ENCODE measurements at regions of chr10 and their contacts with region 1.

Region 1: GRCh38 chr10:11515596-11516430 is 95.6 kb downstream of the USP6NL start:
- DNase-seq: peak; percentile 54
- H3K4me3 ChIP-seq: no peak overlapping the region
- H3K27ac ChIP-seq: no peak overlapping the region
- H3K4me1 ChIP-seq: no peaks in the 10 kb centered on the region
- H3K27me3 ChIP-seq: no peaks in the 10 kb centered on the region
- CTCF ChIP-seq: peak; percentile 78 to 83 (median 82)
- EP300 ChIP-seq: no peak
- POLR2A ChIP-seq: no peak

Region 2: DNA sequence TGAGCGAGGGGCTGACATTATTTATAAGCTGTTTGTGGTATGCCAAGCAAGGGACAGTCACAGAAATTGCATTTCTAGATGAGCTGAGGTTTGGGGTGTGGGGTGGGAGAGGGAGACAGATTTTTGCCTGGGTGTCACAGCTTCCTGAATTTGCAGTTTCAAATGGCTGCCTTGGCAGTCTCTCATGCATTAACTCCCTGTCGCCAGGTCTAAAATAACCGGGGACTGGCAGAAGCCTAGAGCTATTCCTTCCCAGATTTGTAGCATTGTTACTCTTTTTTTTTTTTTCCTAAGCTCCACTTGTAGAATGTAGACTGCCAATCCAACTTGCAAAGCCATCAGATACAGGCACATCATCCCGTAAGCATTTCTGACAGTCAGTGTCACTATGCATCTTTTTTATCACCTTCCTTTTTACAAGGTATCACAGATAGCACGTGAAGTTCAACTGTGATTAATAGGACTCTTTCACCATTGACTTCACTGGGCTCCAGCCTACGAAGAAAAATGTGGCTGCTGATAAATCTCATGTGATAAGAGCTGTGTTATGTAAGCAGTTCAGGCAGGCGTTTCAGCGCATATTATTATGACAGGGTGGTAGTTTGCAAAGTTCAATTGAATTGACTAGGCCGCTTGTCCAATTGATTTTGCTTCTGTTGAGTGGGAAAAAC is 628.8 kb before region 1 on chr10:
- in situ Hi-C with region 1: no loop called
- intact Hi-C with region 1: no loop called
- DNase-seq: no peak
- H3K4me3 ChIP-seq: no peak overlapping the region
- H3K27ac ChIP-seq: no peak overlapping the region
- H3K4me1 ChIP-seq: no peaks in the 10 kb centered on the region
- H3K27me3 ChIP-seq: no peaks in the 10 kb centered on the region
- CTCF ChIP-seq: no peak
- EP300 ChIP-seq: no peak
- POLR2A ChIP-seq: no peak

Region 3: DNA sequence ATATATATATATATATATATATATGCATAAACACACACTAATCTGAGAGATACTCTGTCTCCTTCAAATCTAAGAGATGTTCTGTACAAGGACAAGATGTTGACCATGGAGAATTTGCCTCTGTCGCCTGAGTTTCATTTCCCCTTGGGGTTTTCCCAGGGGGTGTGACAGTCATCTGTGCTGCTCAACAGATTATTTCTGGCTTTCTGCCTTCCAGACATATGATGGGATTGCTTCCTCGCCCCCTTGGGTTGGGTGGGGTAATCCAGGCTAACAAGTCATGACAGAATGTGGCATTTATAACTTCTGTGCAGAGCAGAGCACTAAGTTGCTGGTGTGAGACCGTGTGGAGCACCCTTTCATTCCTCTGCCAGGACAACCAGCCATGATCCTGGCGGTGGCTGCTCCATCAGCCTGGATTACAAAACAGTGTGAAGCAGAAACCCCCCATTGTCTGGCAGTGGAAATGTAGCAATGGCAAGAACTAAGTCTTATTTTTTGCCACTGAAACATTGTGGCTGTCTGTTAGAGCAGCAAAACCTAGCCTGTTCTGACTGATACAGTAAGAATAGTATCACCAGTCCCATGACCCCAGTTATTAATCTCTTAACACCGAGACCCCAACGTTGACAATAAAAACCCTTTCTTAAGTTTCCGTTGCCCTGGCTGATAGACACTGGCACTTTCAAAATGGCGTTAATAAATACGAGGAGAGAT is 109.4 kb after region 1 on chr10:
- in situ Hi-C with region 1: no loop called
- intact Hi-C with region 1: no loop called
- DNase-seq: peak; percentile 26
- H3K4me3 ChIP-seq: no peak overlapping the region
- H3K27ac ChIP-seq: no peak overlapping the region
- H3K4me1 ChIP-seq: no peaks in the 10 kb centered on the region
- H3K27me3 ChIP-seq: no peaks in the 10 kb centered on the region
- CTCF ChIP-seq: no peak
- EP300 ChIP-seq: no peak
- POLR2A ChIP-seq: no peak

Region 4: GRCh38 chr10:11724938-11725776 is 209.3 kb after region 1 on chr10:
- in situ Hi-C with region 1: loop called (anchors 5 to 10 kb)
- intact Hi-C with region 1: loop called (anchors 10 kb)
- DNase-seq: no peak
- H3K4me3 ChIP-seq: no peak overlapping the region
- H3K27ac ChIP-seq: no peak overlapping the region
- H3K4me1 ChIP-seq: peaks cover 0 to 2% (median 0%) of the 10 kb centered on the region in 4 donors
- H3K27me3 ChIP-seq: no peaks in the 10 kb centered on the region
- CTCF ChIP-seq: peak; percentile 61 to 79 (median 68)
- EP300 ChIP-seq: no peak
- POLR2A ChIP-seq: no peak

Region 5: DNA sequence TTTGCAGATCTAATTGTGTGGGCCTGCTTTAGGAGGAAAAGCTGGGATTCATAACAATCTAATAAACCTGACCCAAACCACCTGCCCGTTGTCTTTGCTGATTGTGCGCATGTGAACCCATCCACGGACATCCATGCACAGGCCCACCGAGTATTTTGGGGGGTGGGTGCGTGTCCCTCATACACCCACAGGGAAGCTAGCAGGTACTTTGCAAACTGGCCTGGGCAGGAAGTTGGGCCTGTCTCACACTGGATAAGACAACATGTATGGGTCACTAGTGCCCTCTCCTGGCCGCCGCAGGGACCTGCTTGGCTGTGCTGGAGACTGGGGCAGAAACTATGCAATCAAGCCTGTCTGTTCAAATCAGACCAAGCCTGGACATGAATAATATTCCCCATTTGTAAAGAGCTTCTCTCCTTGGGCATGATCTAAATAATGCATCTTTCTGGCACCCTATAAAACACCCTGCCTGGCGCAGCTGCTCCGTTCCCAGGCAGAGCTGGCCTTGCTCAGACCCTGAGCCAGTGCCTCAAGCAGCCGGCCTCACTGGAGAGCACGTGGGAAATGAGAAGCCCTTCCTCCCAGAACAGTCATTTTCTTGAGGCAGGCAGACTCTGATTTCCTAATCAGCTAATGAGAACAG is 242.1 kb after region 1 on chr10:
- in situ Hi-C with region 1: loop called (anchors 10 kb)
- intact Hi-C with region 1: loop called (anchors 5 kb)
- DNase-seq: peak; percentile 89
- H3K4me3 ChIP-seq: no peak overlapping the region
- H3K27ac ChIP-seq: peak overlapping the region; percentile 3 to 60 (median 47)
- H3K4me1 ChIP-seq: peaks cover 0 to 11% (median 4%) of the 10 kb centered on the region in 4 donors
- H3K27me3 ChIP-seq: no peaks in the 10 kb centered on the region
- CTCF ChIP-seq: peak; percentile 86 to 91 (median 89)
- EP300 ChIP-seq: no peak
- POLR2A ChIP-seq: no peak

Region 6: DNA sequence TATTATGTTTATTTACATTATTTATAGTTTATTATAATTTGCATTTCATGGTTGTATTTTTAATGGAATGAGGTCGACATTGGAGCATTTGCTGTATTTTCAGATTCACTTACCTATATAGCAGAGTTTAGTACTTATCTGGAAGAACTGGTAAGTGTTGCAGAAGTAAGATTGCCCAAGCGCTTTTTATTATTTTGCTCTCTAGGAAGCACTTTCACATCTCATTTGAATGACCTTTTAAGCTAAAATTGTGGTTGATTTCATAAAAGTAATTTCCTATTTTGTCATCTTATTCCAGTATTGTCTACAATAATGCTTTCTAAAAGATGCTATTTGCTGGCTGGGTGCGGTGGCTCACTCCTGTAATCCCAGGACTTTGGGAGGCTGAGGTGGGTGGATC is 642.3 kb after region 1 on chr10:
- in situ Hi-C with region 1: no loop called
- intact Hi-C with region 1: no loop called
- DNase-seq: no peak
- H3K4me3 ChIP-seq: no peak overlapping the region
- H3K27ac ChIP-seq: no peak overlapping the region
- H3K4me1 ChIP-seq: no peaks in the 10 kb centered on the region
- H3K27me3 ChIP-seq: no peaks in the 10 kb centered on the region
- CTCF ChIP-seq: no peak
- EP300 ChIP-seq: no peak
- POLR2A ChIP-seq: no peak

Measured in transverse colon (tissue), 4 donors.